ENCODE measurements at regions of chr2 and their contacts with region 1.

Region 1: GRCh38 chr2:86520153-86520552 is 43.1 kb downstream of the CHMP3 start:
- DNase-seq: no peak
- H3K4me3 ChIP-seq: no peak overlapping the region
- H3K27ac ChIP-seq: no peak overlapping the region
- H3K4me1 ChIP-seq: no peaks in the 10 kb centered on the region
- CTCF ChIP-seq: no peak

Region 2: GRCh38 chr2:86195055-86195807 is 324.9 kb before region 1 on chr2 and contains the start of gene IMMT:
- CTCF ChIA-PET with region 1: no interaction called
- POLR2A ChIA-PET with region 1: no interaction called
- intact Hi-C with region 1: no loop called
- DNase-seq: peak; percentile 96
- H3K4me3 ChIP-seq: peak within 1 kb of the TSS; percentile 95
- H3K27ac ChIP-seq: peak within 1 kb of the TSS; percentile 94
- H3K4me1 ChIP-seq: peaks cover 42% of the 10 kb centered on the region
- CTCF ChIP-seq: no peak
- total RNA-seq, gene IMMT: 77.3 and 82.1 TPM in 2 replicates

Region 3: GRCh38 chr2:86584151-86584913 is 64.2 kb after region 1 on chr2:
- CTCF ChIA-PET with region 1: no interaction called
- POLR2A ChIA-PET with region 1: no interaction called
- intact Hi-C with region 1: loop called (anchors 10 kb)
- DNase-seq: no peak
- H3K4me3 ChIP-seq: no peak overlapping the region
- H3K27ac ChIP-seq: no peak overlapping the region
- H3K4me1 ChIP-seq: no peaks in the 10 kb centered on the region
- CTCF ChIP-seq: no peak

Region 4: GRCh38 chr2:86790676-86791572 is 270.8 kb after region 1 on chr2 and contains the start of gene CD8A:
- CTCF ChIA-PET with region 1: no interaction called
- POLR2A ChIA-PET with region 1: no interaction called
- intact Hi-C with region 1: no loop called
- DNase-seq: no peak
- H3K4me3 ChIP-seq: no peak within 1 kb of the TSS
- H3K27ac ChIP-seq: no peak within 1 kb of the TSS
- H3K4me1 ChIP-seq: no peaks in the 10 kb centered on the region
- CTCF ChIP-seq: no peak
- total RNA-seq, gene CD8A: not detected in 2 replicates